Ovary (tissue), 10 donors: ENCODE measurements at regions of chr18 and their contacts with region 1.

Region 1: DNA sequence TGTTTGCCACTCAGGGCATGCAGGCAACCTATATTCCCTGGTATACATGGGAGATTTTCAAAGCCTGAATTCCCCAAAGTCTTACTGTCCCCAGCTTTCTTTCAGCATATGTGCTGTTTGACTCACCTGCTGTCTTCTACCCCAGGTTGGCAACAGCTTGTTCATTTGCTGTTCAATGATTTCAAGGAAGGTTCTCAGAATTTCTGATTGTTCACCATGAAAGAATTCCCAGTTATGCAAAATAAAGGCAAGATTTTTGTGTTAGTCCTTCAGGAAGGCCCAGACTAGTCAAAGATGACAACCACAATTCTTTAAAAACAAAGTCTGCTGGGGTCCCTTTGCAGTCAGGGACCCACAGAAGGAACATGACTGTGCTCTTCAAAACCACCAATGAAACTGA is 1057.8 kb upstream of the CDH2 start:
- DNase-seq: no peak
- H3K4me3 ChIP-seq: no peak overlapping the region
- H3K27ac ChIP-seq: no peak overlapping the region
- H3K4me1 ChIP-seq: no peaks in the 10 kb centered on the region
- H3K27me3 ChIP-seq: no peaks in the 10 kb centered on the region
- CTCF ChIP-seq: no peak
- EP300 ChIP-seq: no peak
- POLR2A ChIP-seq: no peak

Region 2: DNA sequence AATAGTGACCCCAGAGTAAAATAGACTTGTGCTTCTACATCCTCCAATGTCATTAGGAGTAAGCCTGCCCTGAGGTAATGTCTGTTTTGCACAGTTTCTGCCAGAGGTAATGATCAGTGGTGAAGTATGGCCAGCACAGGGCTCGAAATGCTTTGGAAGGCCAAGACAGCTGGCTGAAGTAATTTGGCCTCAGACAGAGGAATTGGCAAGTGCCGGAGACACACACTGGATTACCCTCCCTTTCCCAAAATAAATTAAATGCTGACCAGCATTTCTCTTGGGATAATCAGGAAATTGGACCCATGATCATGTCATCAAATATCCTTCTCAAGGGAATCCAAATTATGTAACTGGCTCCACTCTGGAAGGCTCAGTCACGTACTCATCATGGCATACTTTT is 1670.7 kb before region 1 on chr18:
- intact Hi-C with region 1: loop called in 1 of 4 experiments (anchors 10 kb)
- DNase-seq: no peak
- H3K4me3 ChIP-seq: no peak overlapping the region
- H3K27ac ChIP-seq: no peak overlapping the region
- H3K4me1 ChIP-seq: no peaks in the 10 kb centered on the region
- H3K27me3 ChIP-seq: no peaks in the 10 kb centered on the region
- CTCF ChIP-seq: no peak
- EP300 ChIP-seq: no peak
- POLR2A ChIP-seq: no peak

Region 3: GRCh38 chr18:28115149-28115550 is 1119.6 kb before region 1 on chr18:
- intact Hi-C with region 1: loop called in 1 of 4 experiments (anchors 10 kb)
- DNase-seq: no peak
- H3K4me3 ChIP-seq: no peak overlapping the region
- H3K27ac ChIP-seq: no peak overlapping the region
- H3K4me1 ChIP-seq: peaks cover 4% of the 10 kb centered on the region
- H3K27me3 ChIP-seq: no peaks in the 10 kb centered on the region
- CTCF ChIP-seq: no peak
- EP300 ChIP-seq: no peak
- POLR2A ChIP-seq: no peak

Region 4: GRCh38 chr18:29430416-29430815 is 195.7 kb after region 1 on chr18:
- intact Hi-C with region 1: no loop called
- DNase-seq: no peak
- H3K4me3 ChIP-seq: no peak overlapping the region
- H3K27ac ChIP-seq: no peak overlapping the region
- H3K4me1 ChIP-seq: no peaks in the 10 kb centered on the region
- H3K27me3 ChIP-seq: no peaks in the 10 kb centered on the region
- CTCF ChIP-seq: no peak
- EP300 ChIP-seq: no peak
- POLR2A ChIP-seq: no peak